ENCODE measurements at regions of chr17 and their contacts with region 1.

Region 1: DNA sequence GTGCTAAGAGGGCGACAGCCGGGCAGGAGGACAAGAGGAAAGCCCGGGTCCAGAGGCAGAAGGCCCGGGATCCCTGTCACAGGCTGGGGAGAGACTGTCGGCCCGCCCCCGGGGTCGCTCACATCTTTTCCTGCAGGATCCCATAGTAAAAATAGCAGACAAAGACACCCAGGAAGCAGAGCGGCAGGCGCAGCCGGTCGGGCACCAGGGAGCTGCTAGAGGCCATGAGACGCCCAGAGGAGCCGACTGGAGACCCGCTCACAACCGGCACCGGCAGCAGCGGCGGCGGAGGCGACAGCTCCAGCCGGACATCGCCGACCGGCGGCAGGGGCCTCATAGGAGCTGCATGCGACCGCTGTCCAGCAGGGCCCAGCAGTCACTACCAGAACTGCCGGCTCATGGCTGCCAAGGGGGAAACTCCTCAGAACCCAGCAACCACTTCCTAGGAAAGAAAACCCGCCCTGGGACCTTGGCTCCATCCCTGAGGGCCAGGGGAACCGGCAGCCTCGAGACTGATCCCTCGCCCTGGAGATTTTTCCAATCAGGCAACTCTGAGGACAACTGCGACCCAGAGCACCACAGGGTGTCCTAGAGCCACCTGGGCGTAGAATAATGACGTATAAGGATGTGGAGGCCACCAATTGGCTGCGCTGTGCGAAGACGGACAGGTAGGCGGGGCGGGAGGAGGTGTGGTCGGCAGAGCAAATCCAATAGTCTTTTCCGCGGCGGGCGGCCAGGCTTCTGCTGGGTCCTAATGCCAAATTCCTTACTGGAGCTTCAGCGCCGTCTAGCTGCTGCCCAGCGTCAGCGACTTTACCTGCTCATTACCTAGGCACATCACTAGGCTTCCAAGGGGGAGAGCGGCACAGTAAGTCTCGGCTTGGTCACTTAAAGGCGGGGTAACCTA is at the start of gene SLC35B1:
- DNase-seq: peak; percentile 97
- H3K4me3 Mint-ChIP-seq: peak within 1 kb of the TSS; percentile 98
- H3K27ac Mint-ChIP-seq: peak within 1 kb of the TSS; percentile 97
- H3K4me1 Mint-ChIP-seq: peaks cover 40% of the 10 kb centered on the region
- H3K27me3 Mint-ChIP-seq: peaks cover 1% of the 10 kb centered on the region
- total RNA-seq, gene SLC35B1: 71.6 and 75.4 TPM in 2 replicates

Region 2: GRCh38 chr17:49361902-49362722 is 345.7 kb before region 1 on chr17 and contains the start of gene ZNF652:
- intact Hi-C with region 1: loop called (anchors 5 kb)
- DNase-seq: peak; percentile 94
- H3K4me3 Mint-ChIP-seq: peak within 1 kb of the TSS; percentile 88
- H3K27ac Mint-ChIP-seq: peak within 1 kb of the TSS; percentile 89
- H3K4me1 Mint-ChIP-seq: peaks cover 62% of the 10 kb centered on the region
- H3K27me3 Mint-ChIP-seq: no peaks in the 10 kb centered on the region
- total RNA-seq, gene ZNF652: 6.3 and 7.5 TPM in 2 replicates

Region 3: DNA sequence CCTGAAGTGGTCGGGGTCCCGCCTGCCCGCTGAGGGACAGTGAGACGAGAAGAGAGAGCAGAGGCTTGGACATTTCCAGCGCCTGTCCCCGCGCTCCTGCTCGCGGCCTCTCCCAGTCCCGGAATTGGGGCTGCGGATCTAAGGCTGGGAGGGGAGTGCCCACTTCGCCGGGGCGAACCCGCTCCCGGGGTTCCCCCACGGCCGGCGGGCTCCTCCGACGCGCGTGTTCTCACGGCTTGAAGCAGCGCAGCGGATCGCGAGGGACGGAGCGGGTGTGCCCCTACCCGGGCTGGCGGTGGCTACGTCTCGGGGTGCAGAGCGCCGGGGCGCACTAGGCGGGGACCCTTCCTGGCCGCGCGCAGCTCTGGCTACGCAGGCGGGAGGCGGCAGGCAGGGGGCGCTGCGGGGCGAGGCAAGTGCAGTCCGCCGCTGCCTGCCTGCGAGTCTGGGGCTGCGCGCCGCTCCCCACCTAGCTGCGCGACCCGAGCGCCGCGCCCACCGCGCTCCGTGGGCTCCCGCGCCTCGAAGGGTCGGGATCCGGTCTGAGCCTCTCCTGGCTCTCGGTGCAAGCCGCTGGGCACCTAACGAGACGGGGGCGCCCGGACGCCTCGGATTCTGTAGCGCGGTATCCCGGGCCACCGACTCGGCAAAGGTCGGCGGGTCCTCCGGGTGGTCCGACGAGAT is 211.5 kb before region 1 on chr17:
- intact Hi-C with region 1: loop called (anchors 5 kb)
- DNase-seq: peak; percentile 77
- H3K4me3 Mint-ChIP-seq: peak overlapping the region; percentile 66
- H3K27ac Mint-ChIP-seq: no peak overlapping the region
- H3K4me1 Mint-ChIP-seq: no peaks in the 10 kb centered on the region
- H3K27me3 Mint-ChIP-seq: peaks cover 75% of the 10 kb centered on the region

Region 4: GRCh38 chr17:49677933-49678847 is 29.7 kb before region 1 on chr17 and contains the start of gene SPOP:
- intact Hi-C with region 1: loop called (anchors 1 kb)
- DNase-seq: peak; percentile 99
- H3K4me3 Mint-ChIP-seq: peak within 1 kb of the TSS; percentile 91
- H3K27ac Mint-ChIP-seq: peak within 1 kb of the TSS; percentile 99
- H3K4me1 Mint-ChIP-seq: peaks cover 41% of the 10 kb centered on the region
- H3K27me3 Mint-ChIP-seq: peaks cover 5% of the 10 kb centered on the region
- total RNA-seq, gene SPOP: 58.3 and 61.9 TPM in 2 replicates

Region 5: DNA sequence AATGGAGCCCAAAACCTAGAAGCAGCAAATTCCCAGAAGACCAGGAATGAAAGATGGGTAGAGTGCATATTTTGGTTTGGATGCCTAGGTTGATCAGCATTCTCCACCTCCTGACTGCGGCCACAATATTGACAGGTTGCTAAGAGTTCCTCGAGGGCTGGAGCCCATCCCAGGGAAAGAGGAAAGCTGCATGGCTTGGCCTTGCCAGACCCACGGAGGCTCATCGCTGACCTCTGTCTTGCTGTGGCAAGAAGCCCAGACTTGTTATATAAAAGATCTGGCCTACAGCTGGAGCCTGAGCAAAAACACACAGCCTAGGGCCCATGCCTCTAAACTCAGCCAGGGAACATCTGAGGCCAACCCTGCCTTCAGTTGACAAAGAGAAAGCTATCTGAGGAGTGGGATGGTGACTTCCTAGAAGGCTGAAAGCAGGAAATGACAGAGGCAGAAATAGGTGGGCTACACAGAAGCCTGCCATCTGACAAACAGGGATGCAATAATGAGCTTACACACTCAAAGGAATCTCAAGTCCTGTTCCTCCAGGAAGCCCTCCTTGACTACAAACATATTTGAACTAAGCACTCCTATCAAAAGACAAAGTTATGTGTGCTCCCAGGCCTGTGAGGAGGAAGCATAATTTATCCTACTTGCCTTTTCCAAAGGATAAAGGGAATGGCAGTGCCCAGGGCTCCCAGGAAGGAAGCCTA is 22.4 kb after region 1 on chr17:
- intact Hi-C with region 1: no loop called
- DNase-seq: no peak
- H3K4me3 Mint-ChIP-seq: no peak overlapping the region
- H3K27ac Mint-ChIP-seq: no peak overlapping the region
- H3K4me1 Mint-ChIP-seq: peaks cover 37% of the 10 kb centered on the region
- H3K27me3 Mint-ChIP-seq: no peaks in the 10 kb centered on the region

Region 6: GRCh38 chr17:49748791-49749190 is 40.9 kb after region 1 on chr17:
- intact Hi-C with region 1: loop called (anchors 1 kb)
- DNase-seq: peak; percentile 27
- H3K4me3 Mint-ChIP-seq: peak overlapping the region; percentile 78
- H3K27ac Mint-ChIP-seq: peak overlapping the region; percentile 93
- H3K4me1 Mint-ChIP-seq: peaks cover 72% of the 10 kb centered on the region
- H3K27me3 Mint-ChIP-seq: no peaks in the 10 kb centered on the region

Region 7: DNA sequence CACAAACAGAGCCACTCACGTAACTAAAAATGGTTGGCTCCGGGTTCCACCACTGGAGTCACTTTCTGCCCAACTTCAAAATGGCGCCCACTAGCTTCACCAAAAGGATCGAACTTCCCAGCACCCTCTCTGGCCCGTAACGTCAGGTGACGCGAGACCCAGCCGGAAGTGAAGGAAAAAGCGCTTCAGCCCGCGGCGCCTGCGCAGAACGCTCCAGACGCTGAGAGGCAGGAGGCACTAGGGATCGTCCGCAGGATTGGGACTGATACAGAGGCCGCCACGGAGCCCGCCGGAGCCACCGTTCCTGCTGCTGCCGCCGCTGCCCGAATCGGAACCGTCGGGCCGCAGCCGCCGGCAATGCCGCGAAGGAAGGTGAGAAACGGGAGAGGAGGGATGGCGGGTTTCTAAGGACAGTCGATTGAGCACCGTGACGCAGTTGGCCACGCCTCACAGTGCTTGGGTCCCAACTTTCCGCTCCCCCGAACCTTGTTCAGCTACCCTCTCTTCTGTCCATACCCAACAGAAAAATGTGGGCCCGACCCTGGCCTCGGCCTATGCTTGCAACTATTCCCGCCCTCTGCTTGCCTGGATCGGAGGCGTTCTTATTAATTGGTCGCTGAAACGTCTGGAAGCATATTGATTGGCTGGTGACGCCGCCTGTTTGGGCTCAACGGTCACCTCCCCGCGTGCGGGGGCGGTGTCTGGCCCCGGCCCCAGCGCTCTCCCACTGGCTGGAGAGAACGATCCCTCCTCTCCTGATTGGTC is 80.8 kb after region 1 on chr17 and contains the start of gene KAT7:
- intact Hi-C with region 1: loop called (anchors 1 kb)
- DNase-seq: peak; percentile 99
- H3K4me3 Mint-ChIP-seq: peak within 1 kb of the TSS; percentile 94
- H3K27ac Mint-ChIP-seq: peak within 1 kb of the TSS; percentile 99
- H3K4me1 Mint-ChIP-seq: peaks cover 35% of the 10 kb centered on the region
- H3K27me3 Mint-ChIP-seq: no peaks in the 10 kb centered on the region
- total RNA-seq, gene KAT7: 68.5 and 71.1 TPM in 2 replicates

Region 8: GRCh38 chr17:50094753-50095619 is 387.1 kb after region 1 on chr17 and contains the start of gene PDK2:
- intact Hi-C with region 1: loop called (anchors 1 kb)
- DNase-seq: peak; percentile 97
- H3K4me3 Mint-ChIP-seq: peak within 1 kb of the TSS; percentile 85
- H3K27ac Mint-ChIP-seq: peak within 1 kb of the TSS; percentile 88
- H3K4me1 Mint-ChIP-seq: peaks cover 23% of the 10 kb centered on the region
- H3K27me3 Mint-ChIP-seq: peaks cover 2% of the 10 kb centered on the region
- total RNA-seq, gene PDK2: 13.7 and 16.9 TPM in 2 replicates

Measured in activated T-helper 1 cell treated with anti-CD3 and anti-CD28 coated beads, Interleukin-12 subunit alpha, Interleukin-12 subunit beta, Interleukin-2, Interleukin-4 antibody, amounts not matched to agents 30 ng/mL and 10 ng/mL and 1 ng/mL, durations not matched to agents 14 hours and 24 hours and 36 hours (primary cell).